ENCODE measurements at regions of chr6 and their contacts with region 1.

Region 1: GRCh38 chr6:33425668-33426577 is 6.1 kb downstream of the SYNGAP1 start:
- DNase-seq: peak; percentile 93
- H3K4me3 ChIP-seq: peak overlapping the region; percentile 59
- H3K27ac ChIP-seq: peak overlapping the region; percentile 90
- H3K4me1 ChIP-seq: peaks cover 45% of the 10 kb centered on the region
- H3K27me3 ChIP-seq: no peaks in the 10 kb centered on the region
- CTCF ChIP-seq: peak; percentile 66

Region 2: GRCh38 chr6:32462609-32463008 is 963.3 kb before region 1 on chr6:
- CTCF ChIA-PET with region 1: no interaction called
- POLR2A ChIA-PET with region 1: no interaction called
- intact Hi-C with region 1: no loop called
- DNase-seq: peak; percentile 17
- H3K4me3 ChIP-seq: no peak overlapping the region
- H3K27ac ChIP-seq: no peak overlapping the region
- H3K4me1 ChIP-seq: no peaks in the 10 kb centered on the region
- H3K27me3 ChIP-seq: peaks cover 20% of the 10 kb centered on the region
- CTCF ChIP-seq: no peak

Region 3: DNA sequence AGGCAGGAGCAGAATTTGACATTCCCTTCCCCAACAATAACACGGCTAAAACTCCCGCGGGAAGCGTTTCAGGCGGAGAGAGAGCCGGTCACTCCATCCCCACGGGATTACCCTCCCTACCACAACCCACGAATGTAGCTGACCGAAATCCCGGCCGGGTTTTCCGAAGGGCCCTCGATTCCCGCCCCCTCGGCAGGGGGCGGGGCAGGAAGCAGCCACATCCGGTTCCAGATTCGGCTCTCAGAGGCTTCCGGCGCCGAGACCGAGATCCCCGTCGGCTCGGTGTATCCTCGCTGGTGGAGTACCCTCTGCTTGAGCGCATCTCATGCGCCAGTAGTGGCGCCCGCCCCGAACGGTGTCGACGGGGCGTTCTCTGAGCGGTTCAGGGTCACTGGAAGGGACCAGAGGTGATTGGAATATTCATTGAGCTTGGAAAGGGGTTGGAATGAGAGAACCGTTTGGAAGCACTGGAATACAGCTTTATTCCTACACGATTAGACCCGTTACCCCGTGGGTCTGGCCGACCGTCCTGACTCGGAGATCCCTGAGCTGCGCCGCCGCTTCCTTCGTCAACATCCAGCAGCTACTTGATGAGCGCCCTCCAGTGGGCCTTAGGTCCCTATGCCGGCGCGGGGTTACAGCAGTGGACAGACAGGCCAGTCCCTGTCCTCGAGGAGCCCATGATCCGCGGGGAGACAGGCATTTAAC is 126.5 kb before region 1 on chr6:
- CTCF ChIA-PET with region 1: interaction called, 8 read pairs
- POLR2A ChIA-PET with region 1: no interaction called
- intact Hi-C with region 1: loop called (anchors 5 kb)
- DNase-seq: peak; percentile 98
- H3K4me3 ChIP-seq: peak overlapping the region; percentile 75
- H3K27ac ChIP-seq: peak overlapping the region; percentile 92
- H3K4me1 ChIP-seq: peaks cover 6% of the 10 kb centered on the region
- H3K27me3 ChIP-seq: no peaks in the 10 kb centered on the region
- CTCF ChIP-seq: peak; percentile 77

Region 4: DNA sequence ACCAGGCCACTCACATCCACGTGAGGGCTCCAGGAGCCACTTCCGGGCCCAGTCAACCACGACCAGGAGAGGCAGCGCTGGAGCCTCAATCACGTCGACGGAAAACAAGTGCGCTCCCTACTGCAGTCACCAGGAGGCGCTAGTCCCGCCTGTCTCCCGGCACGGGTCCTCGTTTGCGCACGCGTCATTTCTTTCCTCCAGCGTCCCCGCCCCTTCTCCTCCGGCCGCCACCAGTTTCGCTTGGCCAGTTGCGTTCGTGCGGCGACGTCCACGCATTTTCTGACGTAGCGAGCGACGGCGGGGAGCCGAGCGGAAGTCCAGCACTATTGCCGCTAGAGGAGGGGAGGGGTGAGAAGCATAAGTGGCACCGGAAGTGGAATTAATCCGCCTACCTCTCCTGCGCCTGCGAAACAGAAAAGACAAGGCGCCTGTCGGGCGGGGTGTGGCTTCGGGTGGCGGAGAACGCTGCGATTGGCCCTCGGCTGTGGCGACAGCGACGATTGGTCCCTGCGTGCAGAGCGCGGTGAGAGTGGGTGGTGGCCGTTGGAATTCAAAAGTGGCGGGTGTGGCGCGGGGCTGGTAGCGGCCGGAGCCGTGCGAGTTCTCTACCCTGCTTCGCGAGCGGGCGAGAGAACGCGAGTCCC is 34.5 kb before region 1 on chr6 and contains the start of gene KIFC1:
- CTCF ChIA-PET with region 1: interaction called, 5 read pairs
- POLR2A ChIA-PET with region 1: no interaction called
- intact Hi-C with region 1: loop called (anchors 2 kb)
- DNase-seq: peak; percentile 100
- H3K4me3 ChIP-seq: peak within 1 kb of the TSS; percentile 98
- H3K27ac ChIP-seq: peak within 1 kb of the TSS; percentile 98
- H3K4me1 ChIP-seq: peaks cover 19% of the 10 kb centered on the region
- H3K27me3 ChIP-seq: no peaks in the 10 kb centered on the region
- CTCF ChIP-seq: peak; percentile 99
- total RNA-seq, gene KIFC1: 123 and 133 TPM in 2 replicates

Region 5: DNA sequence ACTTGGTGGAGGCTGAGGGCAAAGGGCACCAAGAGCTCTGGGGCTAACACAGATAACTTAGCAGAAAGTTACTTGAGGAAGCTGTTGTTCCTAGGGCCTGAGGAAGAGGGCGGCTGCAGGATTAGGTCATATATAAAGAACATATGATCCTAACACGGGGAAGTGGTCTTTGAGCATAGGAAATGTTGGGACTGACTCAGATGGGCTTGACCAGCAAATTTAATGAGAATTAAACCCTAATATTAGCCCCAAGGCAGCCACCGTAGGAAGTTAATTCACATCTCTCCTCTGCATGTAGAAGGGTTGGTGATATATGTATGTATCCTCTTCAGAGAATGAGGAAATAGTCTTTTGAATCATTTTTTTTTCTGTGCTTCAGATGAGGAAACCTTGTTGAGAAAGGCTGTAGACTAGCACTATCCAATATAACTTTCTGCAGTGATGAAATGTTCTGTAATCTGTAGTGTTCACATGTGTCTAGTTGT is 19.2 kb after region 1 on chr6:
- CTCF ChIA-PET with region 1: no interaction called
- POLR2A ChIA-PET with region 1: no interaction called
- intact Hi-C with region 1: no loop called
- DNase-seq: no peak
- H3K4me3 ChIP-seq: no peak overlapping the region
- H3K27ac ChIP-seq: no peak overlapping the region
- H3K4me1 ChIP-seq: no peaks in the 10 kb centered on the region
- H3K27me3 ChIP-seq: no peaks in the 10 kb centered on the region
- CTCF ChIP-seq: no peak

Region 6: GRCh38 chr6:33497157-33497556 is 71.2 kb after region 1 on chr6:
- CTCF ChIA-PET with region 1: no interaction called
- POLR2A ChIA-PET with region 1: no interaction called
- intact Hi-C with region 1: no loop called
- DNase-seq: no peak
- H3K4me3 ChIP-seq: no peak overlapping the region
- H3K27ac ChIP-seq: no peak overlapping the region
- H3K4me1 ChIP-seq: no peaks in the 10 kb centered on the region
- H3K27me3 ChIP-seq: no peaks in the 10 kb centered on the region
- CTCF ChIP-seq: no peak

Region 7: GRCh38 chr6:33579828-33580714 is 154.1 kb after region 1 on chr6 and contains the start of gene BAK1:
- CTCF ChIA-PET with region 1: no interaction called
- POLR2A ChIA-PET with region 1: no interaction called
- intact Hi-C with region 1: loop called (anchors 10 kb)
- DNase-seq: peak; percentile 95
- H3K4me3 ChIP-seq: peak within 1 kb of the TSS; percentile 81
- H3K27ac ChIP-seq: peak within 1 kb of the TSS; percentile 80
- H3K4me1 ChIP-seq: peaks cover 2% of the 10 kb centered on the region
- H3K27me3 ChIP-seq: no peaks in the 10 kb centered on the region
- CTCF ChIP-seq: peak; percentile 64
- total RNA-seq, gene BAK1: 26.4 and 27.1 TPM in 2 replicates

Region 8: GRCh38 chr6:33668927-33669326 is 243.0 kb after region 1 on chr6:
- CTCF ChIA-PET with region 1: no interaction called
- POLR2A ChIA-PET with region 1: no interaction called
- intact Hi-C with region 1: no loop called
- DNase-seq: no peak
- H3K4me3 ChIP-seq: no peak overlapping the region
- H3K27ac ChIP-seq: no peak overlapping the region
- H3K4me1 ChIP-seq: no peaks in the 10 kb centered on the region
- H3K27me3 ChIP-seq: no peaks in the 10 kb centered on the region
- CTCF ChIP-seq: no peak

Measured in A673 (cell line).